ENCODE measurements at regions of chr3 and their contacts with region 1.

Region 1: GRCh38 chr3:33717866-33718594 is at the start of gene CLASP2:
- DNase-seq: peak; percentile 90 to 93
- ATAC-seq: peak; percentile 98
- H3K4me3 ChIP-seq: peak within 1 kb of the TSS; percentile 81
- H3K27ac ChIP-seq: peak within 1 kb of the TSS; percentile 95
- H3K4me1 ChIP-seq: peaks cover 9% of the 10 kb centered on the region
- H3K27me3 ChIP-seq: no peaks in the 10 kb centered on the region
- CTCF ChIP-seq: peak; percentile 20
- total RNA-seq, gene CLASP2: 37.7 to 71.9 (median 62.5) TPM

Region 2: DNA sequence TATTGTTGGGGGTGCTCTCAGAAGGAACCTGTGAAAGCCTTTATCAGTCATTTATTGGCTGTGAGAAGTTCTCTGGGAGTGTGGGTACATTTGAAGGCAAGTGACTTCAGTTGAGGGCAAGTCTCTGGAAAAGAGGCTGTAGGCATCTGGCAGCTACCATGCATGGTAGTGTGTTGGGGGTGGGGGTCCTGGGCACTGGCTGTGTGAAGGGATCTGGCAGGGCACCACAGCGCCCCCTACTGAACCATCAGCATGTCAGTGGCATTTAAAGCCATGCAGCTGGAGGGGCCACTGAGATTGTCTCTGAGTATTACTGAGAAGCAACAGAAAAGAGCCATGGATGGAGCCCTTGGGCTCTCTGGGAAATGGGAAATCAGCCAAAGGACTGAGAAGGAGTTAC is 573.6 kb before region 1 on chr3:
- intact Hi-C with region 1: no loop called
- DNase-seq: no peak
- ATAC-seq: no peak
- H3K4me3 ChIP-seq: no peak overlapping the region
- H3K27ac ChIP-seq: no peak overlapping the region
- H3K4me1 ChIP-seq: peaks cover 7% of the 10 kb centered on the region
- H3K27me3 ChIP-seq: no peaks in the 10 kb centered on the region
- CTCF ChIP-seq: no peak

Region 3: GRCh38 chr3:33433843-33434242 is 284.2 kb before region 1 on chr3:
- intact Hi-C with region 1: no loop called
- DNase-seq: no peak
- ATAC-seq: no peak
- H3K4me3 ChIP-seq: no peak overlapping the region
- H3K27ac ChIP-seq: no peak overlapping the region
- H3K4me1 ChIP-seq: peaks cover 65% of the 10 kb centered on the region
- H3K27me3 ChIP-seq: no peaks in the 10 kb centered on the region
- CTCF ChIP-seq: no peak

Region 4: GRCh38 chr3:33636125-33636850 is 81.7 kb before region 1 on chr3:
- intact Hi-C with region 1: loop called (anchors 2 kb)
- DNase-seq: no peak
- ATAC-seq: peak in 3 of 4 donors; percentile 48 to 86 (median 65)
- H3K4me3 ChIP-seq: no peak overlapping the region
- H3K27ac ChIP-seq: no peak overlapping the region
- H3K4me1 ChIP-seq: no peaks in the 10 kb centered on the region
- H3K27me3 ChIP-seq: no peaks in the 10 kb centered on the region
- CTCF ChIP-seq: peak; percentile 66

Region 5: GRCh38 chr3:33658991-33659848 is 58.8 kb before region 1 on chr3:
- intact Hi-C with region 1: loop called (anchors 5 kb)
- DNase-seq: peak; percentile 70 to 87
- ATAC-seq: peak; percentile 98 to 99 (median 99)
- H3K4me3 ChIP-seq: peak overlapping the region; percentile 71
- H3K27ac ChIP-seq: peak overlapping the region; percentile 88
- H3K4me1 ChIP-seq: peaks cover 33% of the 10 kb centered on the region
- H3K27me3 ChIP-seq: no peaks in the 10 kb centered on the region
- CTCF ChIP-seq: no peak

Region 6: DNA sequence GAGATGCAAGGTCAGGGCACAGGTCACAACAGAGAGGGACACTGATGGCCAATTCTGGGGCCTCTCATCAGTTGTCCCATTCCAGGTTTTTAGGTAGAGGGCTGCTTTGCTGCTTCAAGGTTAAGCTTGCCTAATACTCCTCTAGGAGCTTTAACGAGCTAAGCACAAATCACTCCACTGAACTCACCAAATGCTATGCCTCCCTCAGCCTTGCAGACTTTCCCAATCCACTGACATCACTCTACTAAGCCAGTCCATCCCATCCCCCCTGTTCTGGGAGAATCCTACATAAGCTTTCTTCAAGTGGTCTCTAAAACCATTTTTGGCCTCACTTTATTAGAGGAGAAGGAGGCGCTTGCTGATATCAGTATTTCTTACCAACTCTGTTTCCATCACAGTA is 55.6 kb after region 1 on chr3:
- intact Hi-C with region 1: loop called in 1 of 2 experiments (anchors 10 kb)
- DNase-seq: no peak
- ATAC-seq: no peak
- H3K4me3 ChIP-seq: no peak overlapping the region
- H3K27ac ChIP-seq: no peak overlapping the region
- H3K4me1 ChIP-seq: no peaks in the 10 kb centered on the region
- H3K27me3 ChIP-seq: no peaks in the 10 kb centered on the region
- CTCF ChIP-seq: no peak

Region 7: DNA sequence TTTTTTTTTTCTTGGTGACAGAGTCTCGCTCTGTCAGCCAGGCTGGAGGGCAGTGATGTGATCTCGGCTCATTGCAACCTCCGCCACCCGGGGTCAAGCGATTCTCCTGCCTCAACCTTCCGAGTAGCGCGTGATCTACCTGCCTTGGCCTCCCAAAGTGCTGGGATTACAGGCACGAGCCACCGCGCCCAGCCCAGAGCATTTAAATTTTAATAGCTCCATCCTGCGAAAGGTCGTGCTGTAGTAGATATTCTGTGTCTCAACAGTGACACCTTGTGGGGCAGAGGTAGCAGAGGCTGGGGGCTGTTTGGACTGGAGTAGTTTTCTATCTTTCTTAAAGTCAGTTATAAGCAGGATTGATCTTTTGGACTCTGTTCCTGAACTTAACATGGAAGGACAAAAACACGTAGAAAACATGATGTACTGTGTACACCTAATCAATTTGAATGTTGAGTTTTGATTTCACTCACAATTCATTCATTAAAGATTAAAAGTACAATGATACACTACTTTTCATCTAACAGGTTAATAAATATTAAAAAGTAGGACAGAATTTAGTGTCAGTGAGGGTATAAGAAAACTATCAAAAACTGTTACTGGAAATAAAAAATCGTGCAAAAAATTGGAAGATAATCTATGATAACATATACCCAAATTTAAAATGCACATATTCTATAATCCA is 69.4 kb after region 1 on chr3:
- intact Hi-C with region 1: loop called (anchors 5 kb)
- DNase-seq: peak in 1 of 2 donors; percentile 31
- ATAC-seq: peak; percentile 71 to 96 (median 88)
- H3K4me3 ChIP-seq: peak overlapping the region; percentile 4
- H3K27ac ChIP-seq: no peak overlapping the region
- H3K4me1 ChIP-seq: no peaks in the 10 kb centered on the region
- H3K27me3 ChIP-seq: no peaks in the 10 kb centered on the region
- CTCF ChIP-seq: peak; percentile 76

Measured in psoas muscle (tissue), 8 donors.